WTC11 (cell line): ENCODE measurements at regions of chr17 and their contacts with region 1.

Region 1: GRCh38 chr17:19362277-19363113 is at the start of gene B9D1:
- DNase-seq: peak; percentile 94
- ATAC-seq: peak; percentile 82
- H3K4me3 Mint-ChIP-seq: peak within 1 kb of the TSS; percentile 83
- H3K27ac Mint-ChIP-seq: peak within 1 kb of the TSS; percentile 73
- H3K4me1 Mint-ChIP-seq: peaks cover 22% of the 10 kb centered on the region
- H3K27me3 Mint-ChIP-seq: no peaks in the 10 kb centered on the region
- CTCF ChIP-seq: peak; percentile 96
- total RNA-seq, gene B9D1: 31.9 to 39.2 TPM (median 39.0 TPM) in 3 replicates

Region 2: GRCh38 chr17:19321481-19322128 is 40.9 kb before region 1 on chr17:
- CTCF ChIA-PET with region 1: interaction called, 24 read pairs
- POLR2A ChIA-PET with region 1: no interaction called
- DNase-seq: peak; percentile 38
- ATAC-seq: peak; percentile 25
- H3K4me3 Mint-ChIP-seq: no peak overlapping the region
- H3K27ac Mint-ChIP-seq: peak overlapping the region; percentile 12
- H3K4me1 Mint-ChIP-seq: peaks cover 23% of the 10 kb centered on the region
- H3K27me3 Mint-ChIP-seq: no peaks in the 10 kb centered on the region
- CTCF ChIP-seq: peak; percentile 43; the same call in 1 of the 2 replicates

Region 3: GRCh38 chr17:19384701-19385411 is 22.4 kb after region 1 on chr17:
- CTCF ChIA-PET with region 1: interaction called, 48 read pairs
- POLR2A ChIA-PET with region 1: no interaction called
- DNase-seq: no peak
- ATAC-seq: no peak
- H3K4me3 Mint-ChIP-seq: no peak overlapping the region
- H3K27ac Mint-ChIP-seq: peak overlapping the region; percentile 88
- H3K4me1 Mint-ChIP-seq: peaks cover 34% of the 10 kb centered on the region
- H3K27me3 Mint-ChIP-seq: no peaks in the 10 kb centered on the region; the same call in 1 of the 2 replicates
- CTCF ChIP-seq: no peak

Region 4: GRCh38 chr17:19433727-19434340 is 71.3 kb after region 1 on chr17:
- CTCF ChIA-PET with region 1: interaction called, 32 read pairs
- POLR2A ChIA-PET with region 1: no interaction called
- DNase-seq: no peak
- ATAC-seq: peak; percentile 54
- H3K4me3 Mint-ChIP-seq: no peak overlapping the region; the same call in 1 of the 2 replicates
- H3K27ac Mint-ChIP-seq: peak overlapping the region; percentile 60
- H3K4me1 Mint-ChIP-seq: peaks cover 59% of the 10 kb centered on the region
- H3K27me3 Mint-ChIP-seq: no peaks in the 10 kb centered on the region
- CTCF ChIP-seq: no peak

Region 5: GRCh38 chr17:19494961-19495806 is 132.7 kb after region 1 on chr17:
- CTCF ChIA-PET with region 1: interaction called, 11 read pairs
- POLR2A ChIA-PET with region 1: no interaction called
- DNase-seq: no peak
- ATAC-seq: no peak
- H3K4me3 Mint-ChIP-seq: no peak overlapping the region
- H3K27ac Mint-ChIP-seq: peak overlapping the region; percentile 31; the same call in 1 of the 2 replicates
- H3K4me1 Mint-ChIP-seq: peaks cover 39% of the 10 kb centered on the region
- H3K27me3 Mint-ChIP-seq: no peaks in the 10 kb centered on the region
- CTCF ChIP-seq: no peak

Region 6: DNA sequence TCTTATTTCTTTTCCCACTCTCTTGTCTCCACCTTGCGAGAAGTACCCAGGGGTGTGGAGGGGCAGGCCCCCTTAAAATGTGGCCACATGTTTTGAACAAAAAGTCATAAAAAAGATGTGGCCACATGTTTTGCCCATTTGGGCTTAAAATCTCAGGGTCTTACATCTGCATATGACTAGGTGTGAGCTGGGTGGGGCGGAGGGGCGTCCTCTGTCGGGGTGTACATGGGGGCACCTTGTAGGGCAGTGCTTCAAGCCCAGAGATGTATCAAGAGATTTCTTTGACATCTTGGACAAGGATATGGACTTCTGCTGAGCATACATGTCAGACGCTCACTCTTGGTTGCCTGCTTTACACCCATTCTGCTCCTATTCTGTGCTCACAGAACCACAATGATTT is 158.1 kb after region 1 on chr17:
- CTCF ChIA-PET with region 1: no interaction called
- POLR2A ChIA-PET with region 1: no interaction called
- DNase-seq: no peak
- ATAC-seq: no peak
- H3K4me3 Mint-ChIP-seq: no peak overlapping the region
- H3K27ac Mint-ChIP-seq: no peak overlapping the region
- H3K4me1 Mint-ChIP-seq: peaks cover 5% of the 10 kb centered on the region
- H3K27me3 Mint-ChIP-seq: no peaks in the 10 kb centered on the region; the same call in 1 of the 2 replicates
- CTCF ChIP-seq: no peak

Region 7: DNA sequence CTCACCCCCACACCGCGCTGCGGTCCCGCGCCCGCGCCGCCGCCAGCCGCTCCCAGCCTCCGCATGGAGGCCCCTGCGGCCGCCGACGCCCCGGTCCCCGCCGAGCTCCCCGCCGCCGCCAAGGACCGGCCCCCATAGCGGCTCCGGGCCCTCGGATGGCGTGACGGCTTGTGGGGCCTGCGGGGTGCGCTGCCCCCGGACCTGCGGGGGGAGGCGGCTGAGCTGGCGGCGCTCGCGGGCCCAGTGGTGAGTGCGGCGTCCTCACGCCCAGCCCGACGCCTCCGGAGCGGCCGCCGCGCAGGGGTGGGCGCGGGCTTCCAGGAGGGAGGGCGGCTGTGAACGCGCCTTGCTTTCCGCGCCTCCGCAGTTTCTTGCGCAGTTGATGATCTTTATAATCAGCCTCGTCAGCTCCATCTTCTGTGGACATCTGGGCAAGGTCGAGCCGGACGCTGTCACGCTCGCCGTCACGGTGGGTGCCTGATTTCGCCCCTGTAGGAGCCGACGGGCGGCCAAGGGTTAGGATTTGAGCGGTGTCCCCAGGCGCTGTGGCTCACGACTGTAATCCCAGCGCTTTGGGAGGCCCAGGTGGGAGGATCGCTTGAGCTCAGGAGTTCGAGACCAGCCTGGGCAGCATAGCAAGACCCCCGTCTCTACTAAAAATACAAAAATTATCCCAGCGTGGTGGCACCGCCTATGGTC is 217.5 kb after region 1 on chr17:
- CTCF ChIA-PET with region 1: interaction called, 12 read pairs
- POLR2A ChIA-PET with region 1: no interaction called
- DNase-seq: peak; percentile 30
- ATAC-seq: peak; percentile 60
- H3K4me3 Mint-ChIP-seq: peak overlapping the region; percentile 78
- H3K27ac Mint-ChIP-seq: no peak overlapping the region
- H3K4me1 Mint-ChIP-seq: peaks cover 22% of the 10 kb centered on the region
- H3K27me3 Mint-ChIP-seq: peaks cover 34% of the 10 kb centered on the region
- CTCF ChIP-seq: no peak

Region 8: GRCh38 chr17:19744922-19745757 is 382.6 kb after region 1 on chr17:
- CTCF ChIA-PET with region 1: interaction called, 15 read pairs
- POLR2A ChIA-PET with region 1: interaction called, 3 read pairs
- DNase-seq: peak; percentile 99
- ATAC-seq: peak; percentile 92
- H3K4me3 Mint-ChIP-seq: peak overlapping the region; percentile 54
- H3K27ac Mint-ChIP-seq: no peak overlapping the region
- H3K4me1 Mint-ChIP-seq: peaks cover 22% of the 10 kb centered on the region
- H3K27me3 Mint-ChIP-seq: peaks cover 13% of the 10 kb centered on the region; the same call in 1 of the 2 replicates
- CTCF ChIP-seq: peak; percentile 97